ENCODE measurements at regions of chr1 and their contacts with region 1.

Region 1: GRCh38 chr1:227762233-227762911 is 27.1 kb downstream of the SNAP47 start:
- DNase-seq: peak; percentile 71 to 85
- ATAC-seq: peak; percentile 27 to 40
- H3K4me3 ChIP-seq: no peak overlapping the region
- H3K27ac ChIP-seq: peak overlapping the region; percentile 90 to 95 (median 92)
- H3K4me1 ChIP-seq: peaks cover 48 to 54% of the 10 kb centered on the region in 2 donors
- H3K27me3 ChIP-seq: no peaks in the 10 kb centered on the region
- CTCF ChIP-seq: peak; percentile 91 to 94 (median 93)
- POLR2A ChIP-seq: no peak

Region 2: GRCh38 chr1:227489572-227489971 is 272.8 kb before region 1 on chr1:
- in situ Hi-C with region 1: loop called in 1 of 4 experiments (anchors 25 kb)
- intact Hi-C with region 1: loop called (anchors 10 kb)
- DNase-seq: no peak
- ATAC-seq: peak; percentile 33 to 55
- H3K4me3 ChIP-seq: no peak overlapping the region
- H3K27ac ChIP-seq: no peak overlapping the region
- H3K4me1 ChIP-seq: peaks cover 0 to 6% of the 10 kb centered on the region in 2 donors
- H3K27me3 ChIP-seq: no peaks in the 10 kb centered on the region
- CTCF ChIP-seq: no peak
- POLR2A ChIP-seq: no peak

Region 3: DNA sequence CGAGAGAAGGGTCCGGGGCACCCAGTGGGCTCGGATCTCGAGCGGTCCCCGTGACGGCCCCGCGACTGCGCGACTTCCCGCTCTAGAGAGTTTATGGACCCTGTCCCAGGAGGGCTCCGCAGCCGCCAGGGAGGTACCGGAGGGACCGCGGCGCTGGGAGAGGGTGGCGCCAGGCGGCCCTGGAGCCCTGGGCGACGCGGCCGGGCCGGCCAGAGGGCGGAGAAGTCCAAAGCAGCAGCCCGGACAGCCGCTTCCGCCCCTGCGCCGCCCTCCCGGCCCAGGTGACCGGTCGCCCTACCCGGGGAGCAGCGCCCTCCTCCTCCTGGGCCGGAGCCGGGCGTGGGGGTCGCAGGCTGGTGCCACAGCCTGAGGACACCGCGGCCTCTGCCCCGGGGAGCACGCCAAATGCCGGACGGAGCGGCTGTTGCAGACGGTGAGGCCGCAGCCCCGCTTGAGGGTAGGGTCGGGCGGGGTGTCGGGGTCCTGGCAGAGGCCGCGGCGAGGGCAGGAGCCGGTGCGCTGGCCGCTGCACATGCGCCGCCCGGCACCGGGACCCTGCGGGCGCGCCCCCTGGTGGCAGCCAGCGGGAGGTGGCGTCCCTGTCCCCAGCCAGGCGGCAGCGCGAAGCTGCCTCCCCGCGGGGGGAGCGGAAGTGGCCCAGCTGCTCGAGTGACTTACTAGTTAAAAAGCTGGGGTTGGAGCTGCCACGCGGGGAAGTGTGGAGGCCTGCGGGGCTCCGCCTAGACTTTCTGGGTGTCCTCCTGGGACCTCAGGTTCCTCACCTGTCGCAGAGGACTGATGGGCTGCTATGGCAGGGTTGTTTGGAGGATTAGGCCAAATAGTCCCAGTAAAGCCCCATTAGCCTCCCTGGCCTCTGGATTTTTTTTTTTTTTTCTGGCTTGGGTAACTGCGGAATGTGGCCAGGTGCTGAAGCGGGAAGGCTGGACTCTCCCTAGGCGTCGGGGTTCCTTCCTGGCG is 219.9 kb before region 1 on chr1:
- in situ Hi-C with region 1: no loop called
- intact Hi-C with region 1: loop called (anchors 10 kb)
- DNase-seq: peak; percentile 68 to 84
- ATAC-seq: peak; percentile 92 to 93
- H3K4me3 ChIP-seq: peak overlapping the region; percentile 75 to 91 (median 88)
- H3K27ac ChIP-seq: peak overlapping the region; percentile 82 to 94 (median 88)
- H3K4me1 ChIP-seq: peaks cover 5 to 14% of the 10 kb centered on the region in 2 donors
- H3K27me3 ChIP-seq: no peaks in the 10 kb centered on the region
- CTCF ChIP-seq: peak; percentile 90 to 99 (median 97)
- POLR2A ChIP-seq: peak in 1 of 2 donors; percentile 46

Region 4: GRCh38 chr1:227787513-227788270 is 25.3 kb after region 1 on chr1:
- in situ Hi-C with region 1: no loop called
- intact Hi-C with region 1: loop called (anchors 1 kb)
- DNase-seq: peak; percentile 87 to 91
- ATAC-seq: peak; percentile 76 to 79
- H3K4me3 ChIP-seq: peak overlapping the region; percentile 68 to 97 (median 70)
- H3K27ac ChIP-seq: peak overlapping the region; percentile 77 to 87 (median 82)
- H3K4me1 ChIP-seq: peaks cover 13 to 20% of the 10 kb centered on the region in 2 donors
- H3K27me3 ChIP-seq: no peaks in the 10 kb centered on the region
- CTCF ChIP-seq: no peak
- POLR2A ChIP-seq: peak; percentile 77 to 88

Region 5: DNA sequence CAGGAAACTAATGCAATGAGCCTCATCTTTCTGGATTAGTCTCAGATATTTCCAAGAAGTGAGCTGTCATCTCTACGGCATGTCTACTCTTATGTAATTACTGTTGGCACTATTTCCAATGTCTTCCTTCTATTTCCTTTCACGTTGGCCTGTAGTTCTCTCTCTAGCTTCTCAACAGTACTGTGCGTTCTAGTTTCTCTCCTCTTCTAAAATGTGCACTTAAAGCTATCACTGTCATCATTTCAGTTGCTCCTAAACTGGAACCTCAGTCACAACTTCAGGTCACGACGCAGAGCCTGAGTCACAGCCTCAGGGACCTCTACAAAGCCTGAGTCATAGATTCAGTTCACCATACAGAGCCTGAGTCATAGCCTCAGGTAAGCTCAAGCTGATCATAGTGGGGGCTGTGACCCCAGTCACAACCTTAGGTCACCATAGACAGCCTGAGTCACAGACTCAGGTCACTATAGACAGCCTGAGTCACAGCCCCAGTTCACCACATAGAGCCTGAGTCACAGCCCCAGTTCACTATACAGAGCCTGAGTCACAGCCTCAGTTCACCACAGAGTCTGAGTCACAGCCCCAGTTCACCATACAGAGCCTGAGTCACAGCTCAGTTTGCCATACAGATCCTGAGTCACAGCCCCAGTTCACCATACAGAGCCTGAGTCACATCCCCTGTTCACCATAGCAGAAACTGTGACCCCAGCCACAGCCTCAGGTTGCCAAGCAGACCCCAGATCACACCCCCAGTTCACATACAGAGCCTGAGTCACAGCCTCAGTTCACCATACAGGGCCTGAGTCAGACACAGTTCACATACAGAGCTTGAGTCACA is 172.3 kb after region 1 on chr1:
- in situ Hi-C with region 1: loop called in 1 of 4 experiments (anchors 10 kb)
- intact Hi-C with region 1: no loop called
- DNase-seq: peak; percentile 43 to 82
- ATAC-seq: peak; percentile 85 to 92
- H3K4me3 ChIP-seq: no peak overlapping the region
- H3K27ac ChIP-seq: peak overlapping the region; percentile 85 to 90 (median 86)
- H3K4me1 ChIP-seq: peaks cover 15 to 30% of the 10 kb centered on the region in 2 donors
- H3K27me3 ChIP-seq: no peaks in the 10 kb centered on the region
- CTCF ChIP-seq: no peak
- POLR2A ChIP-seq: peak in 1 of 2 donors; percentile 30

Region 6: GRCh38 chr1:227954163-227954850 is 191.9 kb after region 1 on chr1:
- in situ Hi-C with region 1: loop called in 2 of 4 experiments (anchors 5 to 10 kb)
- intact Hi-C with region 1: loop called (anchors 1 kb)
- DNase-seq: no peak
- ATAC-seq: no peak
- H3K4me3 ChIP-seq: no peak overlapping the region
- H3K27ac ChIP-seq: no peak overlapping the region
- H3K4me1 ChIP-seq: no peaks in the 10 kb centered on the region
- H3K27me3 ChIP-seq: peaks cover 0 to 13% (median 9%) of the 10 kb centered on the region in 3 donors
- CTCF ChIP-seq: peak in 1 of 5 experiments; percentile 5
- POLR2A ChIP-seq: no peak

Measured in gastrocnemius medialis (tissue), 4 donors.